Tibial artery (tissue), 4 donors: ENCODE measurements at regions of chr16 and their contacts with region 1.

Region 1: GRCh38 chr16:31179747-31180459 is at the start of gene FUS:
- DNase-seq: peak; percentile 89 to 94
- H3K4me3 ChIP-seq: peak within 1 kb of the TSS; percentile 78 to 100
- H3K27ac ChIP-seq: peak within 1 kb of the TSS; percentile 95 to 100
- H3K4me1 ChIP-seq: peaks cover 0 to 39% (median 37%) of the 10 kb centered on the region in 4 donors
- H3K27me3 ChIP-seq: no peaks in the 10 kb centered on the region
- CTCF ChIP-seq: peak in 1 of 2 experiments; percentile 16

Region 2: GRCh38 chr16:30082545-30083090 is 1097.3 kb before region 1 on chr16:
- intact Hi-C with region 1: no loop called
- DNase-seq: no peak
- H3K4me3 ChIP-seq: no peak overlapping the region
- H3K27ac ChIP-seq: no peak overlapping the region
- H3K4me1 ChIP-seq: peaks cover 0 to 13% (median 5%) of the 10 kb centered on the region in 4 donors
- H3K27me3 ChIP-seq: no peaks in the 10 kb centered on the region
- CTCF ChIP-seq: no peak

Region 3: DNA sequence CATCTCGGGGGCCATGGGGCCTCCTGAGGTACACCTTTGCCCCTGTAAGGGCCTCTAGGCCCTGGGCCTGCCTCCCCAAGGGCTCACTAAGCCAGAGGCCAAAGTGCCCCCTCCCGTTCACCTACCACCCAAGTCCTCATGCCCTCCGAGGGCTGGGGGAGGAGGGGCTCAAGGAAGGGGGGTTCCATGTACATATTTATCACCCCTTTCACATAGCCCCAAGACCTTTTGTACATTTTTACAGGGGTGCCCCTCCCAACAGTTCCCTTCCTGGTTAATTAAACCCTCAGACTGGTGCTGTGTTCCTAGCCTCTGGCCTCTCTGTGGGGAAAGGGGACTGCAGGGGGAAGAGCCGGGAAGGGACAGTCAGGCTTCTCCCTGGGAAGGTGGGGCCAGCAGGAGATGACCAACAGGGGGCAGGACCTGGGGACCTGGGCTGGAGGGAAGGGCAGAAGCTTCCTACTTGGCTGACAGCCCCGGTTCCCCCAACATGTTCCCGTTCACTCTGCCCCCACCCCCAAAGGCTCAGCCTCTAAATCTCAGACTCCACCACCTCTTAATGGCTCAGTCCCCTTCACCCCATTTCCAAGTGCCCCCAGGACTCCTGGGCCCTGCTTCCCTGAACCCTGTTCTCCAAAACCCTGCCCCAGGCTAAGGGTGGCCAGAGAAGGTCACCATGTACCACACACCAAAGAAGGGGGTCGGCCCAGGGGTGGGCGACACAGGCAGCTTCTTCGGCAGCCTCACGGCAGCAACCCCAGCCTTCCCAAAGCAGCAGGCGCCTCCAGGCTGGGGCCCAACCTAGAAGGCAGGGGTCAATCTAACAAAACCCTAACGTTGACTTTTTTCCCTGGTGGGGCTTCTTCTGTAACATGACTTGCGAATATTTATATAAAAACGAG is 509.8 kb before region 1 on chr16:
- intact Hi-C with region 1: no loop called
- DNase-seq: no peak
- H3K4me3 ChIP-seq: no peak overlapping the region
- H3K27ac ChIP-seq: no peak overlapping the region
- H3K4me1 ChIP-seq: no peaks in the 10 kb centered on the region
- H3K27me3 ChIP-seq: no peaks in the 10 kb centered on the region
- CTCF ChIP-seq: no peak

Region 4: GRCh38 chr16:31507929-31508705 is 328.2 kb after region 1 on chr16 and contains the start of gene RUSF1:
- intact Hi-C with region 1: loop called (anchors 10 kb)
- DNase-seq: peak; percentile 91 to 94
- H3K4me3 ChIP-seq: peak within 1 kb of the TSS; percentile 80 to 94
- H3K27ac ChIP-seq: peak within 1 kb of the TSS; percentile 89 to 92
- H3K4me1 ChIP-seq: peaks cover 0 to 29% (median 15%) of the 10 kb centered on the region in 4 donors
- H3K27me3 ChIP-seq: no peaks in the 10 kb centered on the region
- CTCF ChIP-seq: no peak